Body of pancreas (tissue), 4 donors: ENCODE measurements at regions of chr15 and their contacts with region 1.

Region 1: GRCh38 chr15:25727867-25728600 is 135.1 kb downstream of the ATP10A start:
- DNase-seq: no peak
- ATAC-seq: no peak
- H3K4me3 ChIP-seq: no peak overlapping the region
- H3K27ac ChIP-seq: no peak overlapping the region
- H3K4me1 ChIP-seq: no peaks in the 10 kb centered on the region
- H3K27me3 ChIP-seq: no peaks in the 10 kb centered on the region
- CTCF ChIP-seq: no peak
- POLR2A ChIP-seq: no peak

Region 2: DNA sequence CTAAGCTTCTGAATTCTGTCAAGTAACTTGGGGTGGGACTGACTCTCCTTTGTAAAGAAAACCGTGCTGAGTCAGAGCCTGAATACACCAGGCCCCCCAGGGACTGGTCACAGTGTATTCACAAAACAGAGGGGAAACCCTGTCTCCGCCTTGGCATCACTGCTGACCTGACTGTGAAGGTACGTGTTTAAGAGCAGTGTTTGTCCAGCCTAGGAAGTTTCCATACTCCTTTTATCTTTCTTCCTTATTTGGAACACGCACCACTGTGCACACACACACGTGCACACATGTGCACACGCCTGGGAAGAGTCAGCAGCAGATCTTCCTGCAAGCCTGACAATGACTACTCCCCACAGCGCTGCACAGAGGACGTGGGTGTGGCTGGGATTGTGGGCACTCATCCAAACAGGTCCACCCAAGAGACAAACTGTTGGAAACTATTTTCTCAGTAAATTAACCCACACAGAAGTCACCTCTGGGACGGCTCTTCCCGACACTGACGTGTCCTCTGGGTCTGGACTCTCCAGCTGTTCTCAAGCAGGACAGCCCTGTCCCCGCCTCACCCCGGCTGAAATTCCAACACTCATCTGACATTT is 47.4 kb after region 1 on chr15:
- intact Hi-C with region 1: no loop called
- DNase-seq: peak in 3 of 4 donors; percentile 23 to 49 (median 23)
- ATAC-seq: peak; percentile 62
- H3K4me3 ChIP-seq: no peak overlapping the region
- H3K27ac ChIP-seq: no peak overlapping the region
- H3K4me1 ChIP-seq: no peaks in the 10 kb centered on the region
- H3K27me3 ChIP-seq: no peaks in the 10 kb centered on the region
- CTCF ChIP-seq: no peak
- POLR2A ChIP-seq: no peak

Region 3: DNA sequence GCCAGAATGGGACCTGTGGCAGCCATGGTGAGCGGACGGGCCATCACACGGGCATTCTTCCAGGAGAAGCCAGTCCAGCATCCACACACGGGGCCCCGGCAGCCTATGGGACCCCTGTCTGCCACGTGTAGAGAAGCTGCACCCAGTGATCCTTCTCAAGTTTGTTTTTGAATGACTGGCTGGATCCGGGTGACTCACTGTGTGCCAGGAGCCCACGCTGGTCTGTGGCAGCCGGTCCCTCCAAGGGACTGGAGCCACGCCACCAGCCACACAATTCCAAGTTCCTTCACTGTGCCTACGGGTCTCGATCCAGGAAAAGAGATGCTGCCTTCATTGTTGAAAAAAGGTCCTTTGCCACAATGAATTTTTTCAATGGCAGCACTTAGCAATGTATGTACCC is 77.0 kb after region 1 on chr15:
- intact Hi-C with region 1: loop called (anchors 10 kb)
- DNase-seq: no peak
- ATAC-seq: no peak
- H3K4me3 ChIP-seq: no peak overlapping the region
- H3K27ac ChIP-seq: no peak overlapping the region
- H3K4me1 ChIP-seq: no peaks in the 10 kb centered on the region
- H3K27me3 ChIP-seq: peaks cover 0 to 3% of the 10 kb centered on the region in 2 donors
- CTCF ChIP-seq: no peak
- POLR2A ChIP-seq: no peak